Esophagus squamous epithelium (tissue), 5 donors: ENCODE measurements at regions of chr10 and their contacts with region 1.

Region 1: GRCh38 chr10:89426230-89426868 is 12.0 kb downstream of the IFIT5 start:
- DNase-seq: no peak
- H3K4me3 ChIP-seq: no peak overlapping the region
- H3K27ac ChIP-seq: no peak overlapping the region
- H3K4me1 ChIP-seq: peaks cover 0 to 12% (median 0%) of the 10 kb centered on the region in 3 donors
- H3K27me3 ChIP-seq: peaks cover 0 to 3% (median 0%) of the 10 kb centered on the region in 4 donors
- CTCF ChIP-seq: peak; percentile 49 to 85 (median 76)
- POLR2A ChIP-seq: no peak

Region 2: GRCh38 chr10:89563861-89564478 is 137.6 kb after region 1 on chr10:
- intact Hi-C with region 1: loop called (anchors 2 kb)
- DNase-seq: no peak
- H3K4me3 ChIP-seq: no peak overlapping the region
- H3K27ac ChIP-seq: no peak overlapping the region
- H3K4me1 ChIP-seq: no peaks in the 10 kb centered on the region
- H3K27me3 ChIP-seq: peaks cover 0 to 9% (median 0%) of the 10 kb centered on the region in 4 donors
- CTCF ChIP-seq: peak; percentile 56 to 84 (median 74)
- POLR2A ChIP-seq: no peak

Region 3: DNA sequence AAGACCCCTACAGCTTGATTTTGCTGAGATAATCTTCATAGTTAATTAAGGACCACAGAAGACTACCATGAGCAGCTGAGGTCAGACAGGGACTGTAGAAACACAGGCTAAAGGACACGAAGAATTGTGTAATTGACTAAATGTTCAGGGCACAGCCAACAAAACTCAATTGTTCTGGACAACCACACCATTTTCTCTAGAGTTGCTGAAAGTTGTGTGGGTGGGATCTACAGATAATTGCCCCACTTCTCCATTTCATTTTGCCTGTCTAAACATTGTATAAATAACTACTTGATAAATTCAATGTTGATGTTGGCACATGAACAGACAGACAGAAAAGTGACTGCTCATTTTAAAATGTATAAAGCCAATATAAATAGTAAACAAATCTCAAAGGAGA is 148.0 kb after region 1 on chr10:
- intact Hi-C with region 1: no loop called
- DNase-seq: no peak
- H3K4me3 ChIP-seq: no peak overlapping the region
- H3K27ac ChIP-seq: no peak overlapping the region
- H3K4me1 ChIP-seq: peaks cover 0 to 14% (median 4%) of the 10 kb centered on the region in 3 donors
- H3K27me3 ChIP-seq: no peaks in the 10 kb centered on the region
- CTCF ChIP-seq: no peak
- POLR2A ChIP-seq: no peak